BJ (cell line): ENCODE measurements at regions of chr1 and their contacts with region 1.

Region 1: DNA sequence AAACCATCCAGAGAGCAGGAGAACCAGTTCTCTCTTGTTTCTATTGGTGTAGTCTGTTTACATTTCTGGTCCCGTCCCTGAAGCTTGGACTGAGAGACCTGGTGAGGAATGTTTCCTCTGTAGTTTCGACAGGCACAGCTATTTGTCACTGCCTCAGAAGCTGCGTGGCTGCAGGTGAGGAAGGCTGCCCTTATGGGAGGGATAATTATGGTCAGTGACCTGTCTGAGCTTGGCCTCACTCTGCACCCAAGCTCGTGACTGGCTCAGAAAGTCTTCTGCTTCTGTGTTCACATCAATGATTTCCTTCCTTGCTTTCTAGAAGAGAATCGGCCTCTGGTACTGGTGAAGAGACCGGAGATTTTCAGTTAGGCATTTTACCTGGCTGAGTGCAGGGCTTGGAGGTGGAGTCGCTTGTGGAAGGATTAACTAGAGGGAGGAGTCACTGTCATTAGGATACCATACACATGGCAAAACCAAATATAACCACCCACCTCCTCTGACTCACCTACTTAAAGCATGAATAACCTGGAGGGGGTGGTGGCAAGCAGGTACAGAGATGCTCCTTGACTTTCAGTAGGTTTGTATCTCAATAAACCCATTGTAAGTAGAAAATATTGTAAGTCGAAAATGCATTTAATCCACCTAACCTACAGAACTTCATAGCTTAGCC is 19.9 kb upstream of the WDR26 start:
- DNase-seq: no peak
- H3K4me3 ChIP-seq: no peak overlapping the region
- H3K27me3 ChIP-seq: no peaks in the 10 kb centered on the region
- CTCF ChIP-seq: no peak

Region 2: DNA sequence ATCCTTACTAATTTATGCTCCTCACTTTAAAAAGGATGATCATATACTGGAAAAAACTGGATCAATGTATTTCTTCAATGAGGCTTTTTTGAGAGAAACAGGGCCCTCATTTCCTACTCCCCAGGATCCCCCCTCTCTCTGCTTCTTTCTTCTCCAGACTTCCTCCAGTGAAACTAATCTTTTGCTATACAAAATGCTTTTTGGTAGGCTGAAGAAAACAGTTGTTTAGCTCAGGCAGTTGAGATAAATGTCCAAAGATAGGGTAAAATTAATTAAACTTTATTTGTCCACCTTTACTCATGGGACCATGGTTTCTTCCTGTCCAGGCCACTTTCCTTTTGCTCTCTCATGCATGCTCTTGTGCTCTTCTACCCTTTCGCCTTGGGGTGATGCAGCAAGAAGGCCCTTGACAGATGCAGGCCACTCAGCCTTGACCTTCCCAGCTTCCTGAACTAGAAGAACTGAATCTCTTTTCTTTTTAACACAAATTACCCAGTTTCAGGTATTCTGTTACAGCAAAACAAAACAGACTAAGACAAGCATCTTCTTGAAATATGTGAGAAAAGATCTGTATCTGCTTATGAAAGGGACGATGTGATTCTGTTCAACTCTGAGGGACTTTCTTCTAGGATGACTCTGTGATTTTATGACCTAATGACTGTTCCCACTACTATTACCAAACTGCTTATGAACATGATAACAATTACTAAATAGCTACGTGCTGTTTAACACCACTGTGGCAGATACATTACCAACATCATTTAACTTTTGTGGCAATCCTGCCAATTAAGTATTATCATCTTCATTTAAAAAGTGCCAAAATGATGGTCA is 188.2 kb before region 1 on chr1:
- CTCF ChIA-PET with region 1: no interaction called
- POLR2A ChIA-PET with region 1: no interaction called
- DNase-seq: no peak
- H3K4me3 ChIP-seq: no peak overlapping the region
- H3K27me3 ChIP-seq: no peaks in the 10 kb centered on the region
- CTCF ChIP-seq: no peak

Region 3: GRCh38 chr1:224434691-224435317 is 19.7 kb before region 1 on chr1 and contains the start of gene WDR26:
- CTCF ChIA-PET with region 1: interaction called, 10 read pairs
- POLR2A ChIA-PET with region 1: interaction called, 3 read pairs
- DNase-seq: no peak
- H3K4me3 ChIP-seq: peak within 1 kb of the TSS; percentile 95
- H3K27me3 ChIP-seq: no peaks in the 10 kb centered on the region
- CTCF ChIP-seq: peak; percentile 30; the same call in 1 of the 2 replicates
- polyA plus RNA-seq, gene WDR26: 17.3 and 30.0 TPM in 2 replicates

Region 4: DNA sequence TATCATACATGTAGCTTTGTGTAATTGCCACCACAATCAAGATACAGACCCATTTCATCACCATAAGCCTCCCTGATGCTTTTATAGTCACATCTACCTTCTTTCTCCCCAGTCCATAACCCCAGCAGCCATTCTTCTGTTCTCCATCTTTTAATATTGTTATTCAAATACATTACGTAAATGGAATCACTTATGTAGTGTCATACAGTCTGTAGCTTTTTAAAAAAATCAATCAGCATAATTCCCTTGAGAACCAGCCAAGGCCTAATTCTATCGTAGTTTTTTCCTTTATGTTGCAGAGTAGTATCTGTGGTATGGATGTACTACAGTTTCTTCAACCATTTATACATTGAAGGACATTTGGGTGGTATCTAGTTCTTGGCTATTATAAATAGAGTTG is 11.6 kb after region 1 on chr1:
- CTCF ChIA-PET with region 1: interaction called, 15 read pairs
- POLR2A ChIA-PET with region 1: interaction called, 13 read pairs
- DNase-seq: no peak
- H3K4me3 ChIP-seq: no peak overlapping the region
- H3K27me3 ChIP-seq: no peaks in the 10 kb centered on the region
- CTCF ChIP-seq: no peak

Region 5: DNA sequence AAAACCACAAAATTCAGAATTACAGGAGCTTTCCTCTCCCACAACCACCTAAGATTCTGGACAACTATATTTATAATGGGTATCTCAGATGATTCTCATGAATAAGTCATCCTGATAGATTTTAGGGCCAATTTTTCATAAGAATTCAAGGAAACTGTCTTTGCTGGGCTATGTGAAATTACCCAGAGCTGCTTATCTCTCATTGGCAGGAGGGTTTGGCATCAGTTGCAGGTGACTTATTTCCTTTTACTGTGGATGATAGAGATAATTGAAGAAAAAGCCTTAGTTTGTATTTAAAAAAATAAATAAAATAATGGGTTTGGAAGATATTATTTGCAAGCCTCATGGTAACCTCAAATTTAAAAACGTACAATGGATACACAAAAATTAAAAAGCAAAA is 18.3 kb after region 1 on chr1:
- CTCF ChIA-PET with region 1: interaction called, 5 read pairs
- POLR2A ChIA-PET with region 1: interaction called, 13 read pairs
- DNase-seq: no peak
- H3K4me3 ChIP-seq: no peak overlapping the region
- H3K27me3 ChIP-seq: no peaks in the 10 kb centered on the region
- CTCF ChIP-seq: no peak